ENCODE measurements at regions of chr2 and their contacts with region 1.

Region 1: DNA sequence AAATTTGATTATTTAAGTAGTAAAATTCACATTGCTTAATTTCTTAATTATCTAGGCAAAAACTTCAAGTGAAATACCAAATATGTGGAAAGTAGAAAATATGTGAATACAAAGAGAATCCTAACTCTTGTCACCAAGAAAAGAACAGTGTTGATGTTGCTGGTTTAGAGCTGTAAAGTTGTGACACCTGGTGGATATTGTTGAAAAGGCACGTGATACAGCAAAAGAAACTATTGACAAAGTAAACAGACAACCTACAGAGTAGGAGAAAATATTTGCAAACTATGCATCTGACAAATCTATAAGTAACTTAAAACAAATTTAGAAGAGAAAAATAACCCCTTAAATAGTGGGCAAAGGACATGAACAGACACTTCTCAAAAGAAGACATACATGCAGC is 25.6 kb upstream of the ZC3H15 start:
- DNase-seq: peak; percentile 68
- ATAC-seq: peak; percentile 89
- H3K4me3 ChIP-seq: no peak overlapping the region
- H3K27ac ChIP-seq: no peak overlapping the region
- H3K4me1 ChIP-seq: peaks cover 7% of the 10 kb centered on the region
- H3K27me3 ChIP-seq: no peaks in the 10 kb centered on the region
- CTCF ChIP-seq: peak; percentile 74
- EP300 ChIP-seq: no peak
- POLR2A ChIP-seq: no peak
- RAD21 ChIP-seq: peak; percentile 79

Region 2: DNA sequence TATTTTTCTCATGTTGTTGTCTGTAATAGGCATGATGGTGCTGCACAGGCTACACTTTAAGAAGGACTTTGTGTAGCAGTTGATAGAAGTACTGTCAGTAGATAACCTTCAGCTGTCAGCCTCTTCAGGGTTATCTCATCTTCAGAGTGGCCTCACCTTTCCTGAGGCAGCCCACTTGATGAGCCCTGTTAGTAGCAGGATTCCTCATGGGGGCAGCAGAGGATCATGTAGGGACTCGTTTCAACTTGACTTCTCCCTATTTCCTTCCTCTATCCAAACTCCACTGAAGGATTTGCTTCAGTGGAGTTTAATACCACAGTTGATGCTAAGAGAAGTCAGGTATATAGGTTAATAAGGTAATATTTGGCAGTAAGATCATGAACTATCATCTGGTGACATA is 1252.2 kb before region 1 on chr2:
- CTCF ChIA-PET with region 1: no interaction called
- POLR2A ChIA-PET with region 1: no interaction called
- in situ Hi-C with region 1: loop called (anchors 25 kb)
- intact Hi-C with region 1: loop called (anchors 5 kb)
- DNase-seq: peak; percentile 60
- ATAC-seq: peak; percentile 99
- H3K4me3 ChIP-seq: no peak overlapping the region
- H3K27ac ChIP-seq: no peak overlapping the region
- H3K4me1 ChIP-seq: no peaks in the 10 kb centered on the region
- H3K27me3 ChIP-seq: no peaks in the 10 kb centered on the region
- CTCF ChIP-seq: peak; percentile 82
- EP300 ChIP-seq: no peak
- POLR2A ChIP-seq: no peak
- RAD21 ChIP-seq: peak; percentile 60; the same call in 1 of the 2 replicates

Region 3: DNA sequence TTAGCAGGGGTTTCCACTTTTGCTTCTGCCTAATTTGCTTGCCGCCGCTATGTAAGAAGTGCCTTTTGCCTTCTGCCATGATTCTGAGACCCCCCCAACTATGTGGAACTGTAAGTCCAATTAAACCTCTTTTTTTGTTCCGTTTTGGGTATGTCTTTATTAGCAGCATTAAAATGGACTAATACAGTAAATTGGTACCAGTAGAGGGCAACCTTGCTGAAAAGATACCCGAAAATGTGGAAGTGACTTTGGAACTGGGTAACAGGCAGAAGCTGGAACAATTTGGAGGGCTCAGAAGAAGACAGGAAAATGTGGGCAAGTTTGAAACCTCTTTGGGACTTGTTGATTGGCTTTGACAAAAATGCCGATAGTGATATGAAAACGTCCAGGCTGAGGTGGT is 938.0 kb before region 1 on chr2:
- CTCF ChIA-PET with region 1: no interaction called
- POLR2A ChIA-PET with region 1: no interaction called
- in situ Hi-C with region 1: no loop called
- intact Hi-C with region 1: loop called (anchors 5 kb)
- DNase-seq: peak; percentile 8
- ATAC-seq: no peak
- H3K4me3 ChIP-seq: no peak overlapping the region
- H3K27ac ChIP-seq: no peak overlapping the region
- H3K4me1 ChIP-seq: no peaks in the 10 kb centered on the region
- H3K27me3 ChIP-seq: no peaks in the 10 kb centered on the region
- CTCF ChIP-seq: peak; percentile 44
- EP300 ChIP-seq: no peak
- POLR2A ChIP-seq: no peak
- RAD21 ChIP-seq: no peak

Region 4: GRCh38 chr2:185628985-185629384 is 831.5 kb before region 1 on chr2:
- CTCF ChIA-PET with region 1: no interaction called
- POLR2A ChIA-PET with region 1: no interaction called
- in situ Hi-C with region 1: loop called (anchors 25 kb)
- intact Hi-C with region 1: loop called (anchors 2 kb)
- DNase-seq: peak; percentile 43
- ATAC-seq: peak; percentile 93
- H3K4me3 ChIP-seq: no peak overlapping the region
- H3K27ac ChIP-seq: no peak overlapping the region
- H3K4me1 ChIP-seq: no peaks in the 10 kb centered on the region
- H3K27me3 ChIP-seq: no peaks in the 10 kb centered on the region
- CTCF ChIP-seq: peak; percentile 73
- EP300 ChIP-seq: no peak
- POLR2A ChIP-seq: no peak
- RAD21 ChIP-seq: peak; percentile 41; the same call in 1 of the 2 replicates

Region 5: GRCh38 chr2:185955050-185955449 is 505.4 kb before region 1 on chr2:
- CTCF ChIA-PET with region 1: no interaction called
- POLR2A ChIA-PET with region 1: no interaction called
- in situ Hi-C with region 1: no loop called
- intact Hi-C with region 1: loop called (anchors 10 kb)
- DNase-seq: no peak
- ATAC-seq: no peak
- H3K4me3 ChIP-seq: no peak overlapping the region
- H3K27ac ChIP-seq: no peak overlapping the region
- H3K4me1 ChIP-seq: no peaks in the 10 kb centered on the region
- H3K27me3 ChIP-seq: no peaks in the 10 kb centered on the region
- CTCF ChIP-seq: no peak
- EP300 ChIP-seq: no peak
- POLR2A ChIP-seq: no peak
- RAD21 ChIP-seq: no peak

Region 6: DNA sequence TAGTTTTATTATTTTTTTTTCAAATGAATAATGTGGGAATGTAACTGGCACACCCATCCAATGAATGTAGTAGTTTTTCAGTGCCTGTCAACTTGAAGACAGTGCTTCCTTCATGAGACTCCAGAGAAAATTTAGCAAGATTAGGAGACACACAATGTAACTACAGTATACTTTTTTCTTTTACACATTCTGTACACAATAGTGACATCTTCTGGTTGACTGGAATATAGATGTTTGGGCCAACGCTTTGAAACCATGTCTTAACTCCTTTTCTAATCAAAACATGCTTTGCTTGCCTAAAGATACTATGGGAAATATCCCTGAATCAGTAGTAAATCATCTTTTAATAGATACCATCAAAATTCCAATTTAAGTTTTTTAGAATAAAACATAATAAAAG is 203.9 kb before region 1 on chr2:
- CTCF ChIA-PET with region 1: no interaction called
- POLR2A ChIA-PET with region 1: no interaction called
- in situ Hi-C with region 1: no loop called
- intact Hi-C with region 1: loop called (anchors 1 kb)
- DNase-seq: peak; percentile 57
- ATAC-seq: peak; percentile 80
- H3K4me3 ChIP-seq: no peak overlapping the region
- H3K27ac ChIP-seq: no peak overlapping the region
- H3K4me1 ChIP-seq: no peaks in the 10 kb centered on the region
- H3K27me3 ChIP-seq: no peaks in the 10 kb centered on the region
- CTCF ChIP-seq: peak; percentile 82
- EP300 ChIP-seq: no peak
- POLR2A ChIP-seq: no peak
- RAD21 ChIP-seq: peak; percentile 79

Region 7: DNA sequence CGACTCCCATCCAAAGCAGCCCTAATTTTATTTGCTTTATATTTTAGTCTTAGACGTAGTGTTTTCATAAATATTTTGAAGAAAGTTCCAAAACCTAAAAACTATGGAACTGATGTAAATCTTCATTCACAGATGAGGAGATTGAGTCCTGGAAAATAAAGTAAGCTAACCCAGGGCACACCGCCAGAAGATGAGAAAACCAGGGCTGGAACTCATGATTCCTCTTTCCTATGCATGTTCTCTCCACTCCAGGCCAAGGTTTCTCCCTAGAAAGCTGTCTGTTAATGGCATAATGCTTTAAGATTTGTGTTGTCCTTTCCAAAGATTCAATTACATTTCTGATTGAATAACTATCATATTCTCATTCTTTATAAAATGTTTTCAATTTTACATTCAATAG is 52.9 kb before region 1 on chr2:
- CTCF ChIA-PET with region 1: no interaction called
- POLR2A ChIA-PET with region 1: no interaction called
- in situ Hi-C with region 1: no loop called
- intact Hi-C with region 1: no loop called
- DNase-seq: no peak
- ATAC-seq: no peak
- H3K4me3 ChIP-seq: no peak overlapping the region
- H3K27ac ChIP-seq: no peak overlapping the region
- H3K4me1 ChIP-seq: 0 out of 2 replicates have a peak, but pooled peaks cover 7% of the 10 kb centered on the region
- H3K27me3 ChIP-seq: no peaks in the 10 kb centered on the region
- CTCF ChIP-seq: no peak
- EP300 ChIP-seq: no peak
- POLR2A ChIP-seq: no peak
- RAD21 ChIP-seq: no peak

Measured in HepG2 (cell line).